ENCODE measurements at regions of chr15 and their contacts with region 1.

Region 1: GRCh38 chr15:91981821-91982801 is 128.6 kb downstream of the SLCO3A1 start:
- DNase-seq: no peak
- H3K4me3 ChIP-seq: no peak overlapping the region
- H3K27ac ChIP-seq: no peak overlapping the region
- H3K4me1 ChIP-seq: peaks cover 23% of the 10 kb centered on the region
- H3K27me3 ChIP-seq: no peaks in the 10 kb centered on the region
- CTCF ChIP-seq: no peak
- POLR2A ChIP-seq: no peak

Region 2: GRCh38 chr15:90465140-90465922 is 1516.8 kb before region 1 on chr15:
- intact Hi-C with region 1: loop called (anchors 5 kb)
- DNase-seq: no peak
- H3K4me3 ChIP-seq: no peak overlapping the region
- H3K27ac ChIP-seq: no peak overlapping the region
- H3K4me1 ChIP-seq: peaks cover 14% of the 10 kb centered on the region
- H3K27me3 ChIP-seq: no peaks in the 10 kb centered on the region
- CTCF ChIP-seq: no peak
- POLR2A ChIP-seq: no peak

Measured in vagina (tissue), 2 donors.